ENCODE measurements at regions of chr12 and their contacts with region 1.

Region 1: DNA sequence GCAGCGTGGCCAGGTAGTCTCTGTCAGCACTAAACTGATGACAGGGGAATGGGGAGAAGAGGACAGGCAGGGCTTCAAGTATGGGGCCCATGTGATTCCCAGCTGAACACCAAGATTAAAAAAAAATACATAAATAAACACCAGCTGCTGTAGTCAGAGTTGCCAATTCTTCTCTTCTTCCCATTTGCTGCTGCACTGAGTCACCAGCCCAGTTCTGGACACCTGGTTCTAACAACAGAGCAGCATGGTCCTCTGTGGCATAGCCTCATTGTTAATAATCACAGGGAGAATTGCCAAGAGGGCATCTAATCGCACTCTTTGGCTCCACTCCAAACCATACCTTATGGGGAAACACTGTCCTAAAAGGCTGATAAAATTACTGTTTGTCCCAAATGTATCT is 15.1 kb downstream of the PPM1H start:
- DNase-seq: peak in 34 of 42 donors; percentile 14 to 80 (median 48)

Region 2: GRCh38 chr12:62714774-62715721 is 204.8 kb before region 1 on chr12:
- intact Hi-C with region 1: loop called (anchors 10 kb)
- DNase-seq: peak; percentile 18 to 86 (median 56)

Region 3: DNA sequence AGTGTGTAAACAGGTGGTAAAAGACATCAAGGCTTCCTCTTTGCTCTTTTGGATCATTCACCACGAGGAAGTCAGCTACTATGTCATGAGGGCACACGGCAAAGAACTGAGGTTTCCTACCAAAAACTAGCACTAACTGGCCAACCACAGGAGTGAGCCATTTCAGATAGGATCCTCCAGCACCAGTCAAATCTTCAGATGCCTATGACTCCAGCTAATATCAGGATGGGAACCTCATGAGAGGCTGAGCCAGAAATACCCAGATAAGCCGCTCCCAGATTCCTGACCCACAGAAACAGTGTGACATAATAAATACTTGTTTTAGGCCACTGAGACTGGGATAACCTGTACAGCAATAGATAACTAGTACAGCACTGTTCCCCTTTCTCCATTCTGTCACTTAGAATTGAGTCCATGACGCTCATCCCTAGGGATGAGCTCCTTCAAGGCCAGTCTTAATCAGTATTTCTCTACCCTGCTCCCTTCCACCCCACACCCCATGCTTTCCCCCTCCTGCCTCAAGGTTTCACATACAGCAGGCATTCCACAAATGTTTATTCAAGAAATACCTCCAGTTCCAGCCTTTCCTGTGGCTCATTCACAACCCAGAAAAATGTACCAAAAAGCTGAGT is 53.3 kb before region 1 on chr12:
- intact Hi-C with region 1: loop called (anchors 10 kb)
- DNase-seq: no peak

Measured in head of caudate nucleus (tissue), 42 donors.